Left lung (tissue), 14 donors: ENCODE measurements at regions of chr3 and their contacts with region 1.

Region 1: GRCh38 chr3:46488735-46489361 is 8.9 kb upstream of the RTP3 start:
- DNase-seq: peak; percentile 75 to 95 (median 92)
- ATAC-seq: peak; percentile 100
- H3K4me3 ChIP-seq: no peak overlapping the region
- H3K27ac ChIP-seq: no peak overlapping the region
- H3K4me1 ChIP-seq: peaks cover 5 to 24% of the 10 kb centered on the region in 2 donors
- H3K27me3 ChIP-seq: no peaks in the 10 kb centered on the region
- CTCF ChIP-seq: peak; percentile 90 to 99

Region 2: GRCh38 chr3:46127501-46127900 is 361.3 kb before region 1 on chr3:
- intact Hi-C with region 1: no loop called
- DNase-seq: no peak
- ATAC-seq: peak; percentile 68
- H3K4me3 ChIP-seq: no peak overlapping the region
- H3K27ac ChIP-seq: peak overlapping the region; percentile 6 to 9
- H3K4me1 ChIP-seq: peaks cover 3 to 72% of the 10 kb centered on the region in 2 donors
- H3K27me3 ChIP-seq: no peaks in the 10 kb centered on the region
- CTCF ChIP-seq: no peak

Region 3: GRCh38 chr3:46629551-46630517 is 141.0 kb after region 1 on chr3:
- intact Hi-C with region 1: loop called in 1 of 2 experiments (anchors 5 kb)
- DNase-seq: peak; percentile 82 to 94 (median 88)
- ATAC-seq: peak; percentile 98
- H3K4me3 ChIP-seq: peak overlapping the region; percentile 5 to 22
- H3K27ac ChIP-seq: peak overlapping the region; percentile 53 to 70
- H3K4me1 ChIP-seq: peaks cover 0 to 9% of the 10 kb centered on the region in 2 donors
- H3K27me3 ChIP-seq: no peaks in the 10 kb centered on the region
- CTCF ChIP-seq: peak; percentile 92 to 96